ENCODE measurements at regions of chr14 and their contacts with region 1.

Region 1: DNA sequence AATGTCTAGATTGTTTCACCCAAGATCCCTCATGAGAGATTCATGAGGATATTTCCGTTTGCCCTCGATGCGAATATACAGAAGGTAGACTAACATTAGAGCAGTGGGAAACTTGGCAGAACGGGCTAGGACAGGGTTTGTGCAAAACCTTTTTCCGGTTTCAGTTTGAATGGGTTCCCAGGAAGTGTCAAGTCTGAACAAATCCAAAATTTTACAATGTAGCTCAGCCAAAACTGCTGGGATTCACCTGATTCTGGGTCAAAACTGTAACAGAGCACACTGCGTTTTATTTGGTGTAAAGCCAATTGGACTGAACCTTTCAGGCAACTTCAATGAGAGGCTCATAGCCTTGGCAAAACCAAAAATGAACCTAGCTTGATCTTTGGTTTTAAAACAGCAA is 337.8 kb upstream of the DIO2 start:
- DNase-seq: no peak
- ATAC-seq: no peak
- H3K4me3 Mint-ChIP-seq: no peak overlapping the region
- H3K27ac Mint-ChIP-seq: no peak overlapping the region
- H3K4me1 Mint-ChIP-seq: no peaks in the 10 kb centered on the region
- H3K27me3 Mint-ChIP-seq: no peaks in the 10 kb centered on the region
- CTCF ChIP-seq: no peak

Region 2: GRCh38 chr14:81638656-81639280 is 1089.6 kb after region 1 on chr14:
- CTCF ChIA-PET with region 1: no interaction called
- POLR2A ChIA-PET with region 1: interaction called, 10 read pairs
- DNase-seq: no peak
- ATAC-seq: no peak
- H3K4me3 Mint-ChIP-seq: no peak overlapping the region
- H3K27ac Mint-ChIP-seq: no peak overlapping the region
- H3K4me1 Mint-ChIP-seq: peaks cover 9% of the 10 kb centered on the region
- H3K27me3 Mint-ChIP-seq: 0 out of 2 replicates have a peak, but pooled peaks cover 2% of the 10 kb centered on the region
- CTCF ChIP-seq: no peak